ENCODE measurements at regions of chr17 and their contacts with region 1.

Region 1: GRCh38 chr17:75749545-75750389 is 15.2 kb downstream of the GALK1 start:
- DNase-seq: peak; percentile 89
- ATAC-seq: peak; percentile 73
- H3K4me3 Mint-ChIP-seq: no peak overlapping the region
- H3K27ac Mint-ChIP-seq: no peak overlapping the region
- H3K4me1 Mint-ChIP-seq: peaks cover 18% of the 10 kb centered on the region
- H3K27me3 Mint-ChIP-seq: peaks cover 6% of the 10 kb centered on the region

Region 2: GRCh38 chr17:75625813-75626486 is 123.8 kb before region 1 on chr17:
- CTCF ChIA-PET with region 1: interaction called, 218 read pairs
- DNase-seq: peak; percentile 50
- ATAC-seq: peak; percentile 69
- H3K4me3 Mint-ChIP-seq: no peak overlapping the region
- H3K27ac Mint-ChIP-seq: no peak overlapping the region
- H3K4me1 Mint-ChIP-seq: no peaks in the 10 kb centered on the region
- H3K27me3 Mint-ChIP-seq: no peaks in the 10 kb centered on the region

Region 3: DNA sequence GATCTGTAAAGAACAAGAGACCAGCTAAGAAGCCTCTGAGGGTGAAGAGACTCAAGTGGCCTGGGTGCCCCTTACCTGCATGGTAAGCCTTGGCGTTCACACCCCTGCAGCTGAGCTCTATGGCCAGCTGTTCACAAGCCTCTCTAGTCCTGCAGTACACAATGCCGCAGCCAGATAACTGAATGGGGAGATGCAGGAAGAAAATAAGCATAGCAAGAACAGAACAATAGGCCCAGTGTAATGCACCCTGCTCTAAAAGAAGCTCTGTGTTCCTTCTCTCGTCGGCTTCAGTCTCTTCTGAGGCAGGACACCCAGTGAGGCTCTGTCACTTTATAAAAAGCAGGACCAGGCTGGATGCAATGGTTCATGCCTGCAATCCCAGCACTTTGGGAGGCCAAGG is 88.2 kb before region 1 on chr17:
- CTCF ChIA-PET with region 1: interaction called, 36 read pairs
- DNase-seq: no peak
- ATAC-seq: no peak
- H3K4me3 Mint-ChIP-seq: no peak overlapping the region
- H3K27ac Mint-ChIP-seq: no peak overlapping the region
- H3K4me1 Mint-ChIP-seq: peaks cover 12% of the 10 kb centered on the region
- H3K27me3 Mint-ChIP-seq: no peaks in the 10 kb centered on the region

Region 4: GRCh38 chr17:75738218-75738802 is 11.5 kb before region 1 on chr17:
- CTCF ChIA-PET with region 1: interaction called, 41 read pairs
- DNase-seq: peak; percentile 82
- ATAC-seq: peak; percentile 79
- H3K4me3 Mint-ChIP-seq: no peak overlapping the region
- H3K27ac Mint-ChIP-seq: peak overlapping the region; percentile 72
- H3K4me1 Mint-ChIP-seq: peaks cover 14% of the 10 kb centered on the region
- H3K27me3 Mint-ChIP-seq: no peaks in the 10 kb centered on the region

Region 5: GRCh38 chr17:75795820-75796607 is 46.2 kb after region 1 on chr17:
- CTCF ChIA-PET with region 1: interaction called, 16 read pairs
- DNase-seq: no peak
- ATAC-seq: no peak
- H3K4me3 Mint-ChIP-seq: no peak overlapping the region
- H3K27ac Mint-ChIP-seq: no peak overlapping the region
- H3K4me1 Mint-ChIP-seq: peaks cover 41% of the 10 kb centered on the region
- H3K27me3 Mint-ChIP-seq: no peaks in the 10 kb centered on the region

Region 6: DNA sequence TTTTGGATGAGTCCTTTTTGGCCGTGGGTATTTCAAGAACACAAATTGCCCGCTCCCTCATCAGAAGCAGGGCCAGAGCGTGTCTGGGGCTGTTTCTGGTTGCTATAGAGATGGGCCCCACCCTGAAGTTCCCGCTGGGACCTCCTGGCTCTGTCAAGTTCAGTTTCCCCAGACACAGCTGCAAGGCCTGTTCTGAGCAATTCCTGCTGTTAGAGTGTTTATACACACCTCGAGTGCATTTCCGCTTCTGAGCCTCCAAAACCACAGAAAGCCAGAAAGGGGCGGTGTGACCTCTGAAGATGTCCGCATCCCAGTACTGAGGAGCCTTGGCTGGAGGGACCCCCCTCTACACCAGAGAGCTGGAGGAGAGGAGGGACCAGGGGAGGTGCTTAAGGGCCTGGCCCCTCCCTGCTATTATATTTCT is 114.7 kb after region 1 on chr17:
- CTCF ChIA-PET with region 1: interaction called, 13 read pairs
- DNase-seq: peak; percentile 90
- ATAC-seq: peak; percentile 85
- H3K4me3 Mint-ChIP-seq: peak overlapping the region; percentile 44
- H3K27ac Mint-ChIP-seq: peak overlapping the region; percentile 94
- H3K4me1 Mint-ChIP-seq: peaks cover 22% of the 10 kb centered on the region
- H3K27me3 Mint-ChIP-seq: no peaks in the 10 kb centered on the region

Region 7: DNA sequence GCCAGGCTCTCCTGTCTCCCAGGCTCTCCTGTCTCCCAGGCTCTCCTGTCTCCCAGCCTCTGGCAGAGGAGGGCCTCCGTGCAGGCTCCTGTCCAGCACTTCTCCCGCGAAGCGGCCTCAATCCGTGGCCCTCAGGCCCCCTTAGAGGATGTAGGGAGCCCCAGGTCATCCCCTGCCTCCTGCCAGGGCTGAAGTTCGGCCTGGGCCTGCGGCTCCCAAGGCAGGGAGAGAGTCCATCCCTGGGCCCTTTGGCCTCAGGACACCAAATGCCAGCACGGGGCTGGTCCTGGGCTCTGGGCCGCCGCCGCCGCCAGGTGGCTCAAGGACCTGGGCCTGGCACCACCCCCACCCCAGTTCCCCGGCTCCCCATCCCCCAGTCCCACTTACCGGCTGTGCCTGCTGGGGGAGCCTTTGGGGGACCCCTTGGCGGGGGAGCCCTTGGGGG is 277.0 kb after region 1 on chr17:
- CTCF ChIA-PET with region 1: no interaction called
- DNase-seq: no peak
- ATAC-seq: no peak
- H3K4me3 Mint-ChIP-seq: no peak overlapping the region
- H3K27ac Mint-ChIP-seq: no peak overlapping the region
- H3K4me1 Mint-ChIP-seq: peaks cover 12% of the 10 kb centered on the region
- H3K27me3 Mint-ChIP-seq: no peaks in the 10 kb centered on the region